ENCODE measurements at regions of chr2 and their contacts with region 1.

Region 1: GRCh38 chr2:151409601-151410484 is at the start of gene RIF1:
- DNase-seq: peak; percentile 83 to 89 (median 87)
- H3K4me3 ChIP-seq: peak within 1 kb of the TSS; percentile 99
- H3K27ac ChIP-seq: peak within 1 kb of the TSS; percentile 95
- H3K4me1 ChIP-seq: peaks cover 1% of the 10 kb centered on the region
- H3K27me3 ChIP-seq: no peaks in the 10 kb centered on the region
- CTCF ChIP-seq: peak; percentile 62 to 86 (median 74)
- EP300 ChIP-seq: no peak
- POLR2A ChIP-seq: peak; percentile 56
- total RNA-seq, gene RIF1: 35.5 to 56.1 (median 49.5) TPM

Region 2: DNA sequence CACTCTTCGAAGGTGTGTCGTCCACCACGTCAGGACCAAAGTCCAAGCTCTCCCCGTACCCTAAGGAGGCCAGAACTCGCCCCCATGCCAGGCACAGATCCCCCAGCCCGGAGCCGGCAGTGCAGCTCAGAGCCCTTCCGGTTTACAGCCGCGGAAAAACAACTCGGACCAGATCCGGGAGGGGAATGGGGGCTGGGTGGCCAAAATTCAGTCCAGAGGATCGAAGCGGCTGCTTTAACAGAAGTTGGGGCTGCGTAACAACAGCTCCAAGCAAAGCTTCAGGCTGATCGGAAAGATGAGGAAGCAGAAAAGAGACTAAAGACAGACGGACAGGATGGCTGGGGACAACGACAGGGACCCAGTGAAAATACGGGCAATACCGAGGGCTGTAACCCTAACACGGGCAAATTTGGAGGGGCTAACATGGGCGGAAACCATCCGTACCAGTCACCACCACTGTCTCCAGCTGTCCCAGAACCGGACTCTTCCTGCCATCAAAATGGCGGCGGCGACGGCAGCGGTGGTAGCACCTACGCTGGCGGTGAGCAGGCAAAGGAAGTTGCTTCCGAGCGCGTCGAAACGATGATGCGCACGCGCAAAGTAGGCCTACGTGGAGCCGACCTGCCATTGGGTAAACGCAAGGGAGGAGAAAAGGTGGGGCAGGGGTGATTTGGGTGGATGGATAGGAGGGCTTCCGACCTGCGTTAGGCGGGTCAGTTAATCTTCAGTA is 1822.5 kb before region 1 on chr2 and contains the start of gene MMADHC:
- intact Hi-C with region 1: loop called in 1 of 4 experiments (anchors 10 kb)
- DNase-seq: peak; percentile 93 to 96 (median 94)
- H3K4me3 ChIP-seq: peak within 1 kb of the TSS; percentile 64
- H3K27ac ChIP-seq: peak within 1 kb of the TSS; percentile 80 to 93
- H3K4me1 ChIP-seq: peaks cover 6% of the 10 kb centered on the region
- H3K27me3 ChIP-seq: no peaks in the 10 kb centered on the region
- CTCF ChIP-seq: no peak
- EP300 ChIP-seq: no peak
- POLR2A ChIP-seq: peak; percentile 83
- total RNA-seq, gene MMADHC: 67.0 to 77.0 (median 73.1) TPM

Region 3: GRCh38 chr2:150946831-150947230 is 463.0 kb before region 1 on chr2:
- intact Hi-C with region 1: no loop called
- DNase-seq: no peak
- H3K4me3 ChIP-seq: no peak overlapping the region
- H3K27ac ChIP-seq: no peak overlapping the region
- H3K4me1 ChIP-seq: no peaks in the 10 kb centered on the region
- H3K27me3 ChIP-seq: no peaks in the 10 kb centered on the region
- CTCF ChIP-seq: no peak
- EP300 ChIP-seq: no peak
- POLR2A ChIP-seq: no peak

Region 4: GRCh38 chr2:151261231-151261976 is 148.4 kb before region 1 on chr2 and contains the start of gene RBM43:
- intact Hi-C with region 1: loop called in 1 of 4 experiments (anchors 10 kb)
- DNase-seq: peak; percentile 89 to 94 (median 92)
- H3K4me3 ChIP-seq: peak within 1 kb of the TSS; percentile 81
- H3K27ac ChIP-seq: peak within 1 kb of the TSS; percentile 97
- H3K4me1 ChIP-seq: peaks cover 10% of the 10 kb centered on the region
- H3K27me3 ChIP-seq: no peaks in the 10 kb centered on the region
- CTCF ChIP-seq: no peak
- EP300 ChIP-seq: no peak
- POLR2A ChIP-seq: peak; percentile 44
- total RNA-seq, gene RBM43: 5.5 to 17.3 (median 13.6) TPM

Measured in ovary (tissue), 10 donors.